Caco-2 (cell line): ENCODE measurements at regions of chr10 and their contacts with region 1.

Region 1: DNA sequence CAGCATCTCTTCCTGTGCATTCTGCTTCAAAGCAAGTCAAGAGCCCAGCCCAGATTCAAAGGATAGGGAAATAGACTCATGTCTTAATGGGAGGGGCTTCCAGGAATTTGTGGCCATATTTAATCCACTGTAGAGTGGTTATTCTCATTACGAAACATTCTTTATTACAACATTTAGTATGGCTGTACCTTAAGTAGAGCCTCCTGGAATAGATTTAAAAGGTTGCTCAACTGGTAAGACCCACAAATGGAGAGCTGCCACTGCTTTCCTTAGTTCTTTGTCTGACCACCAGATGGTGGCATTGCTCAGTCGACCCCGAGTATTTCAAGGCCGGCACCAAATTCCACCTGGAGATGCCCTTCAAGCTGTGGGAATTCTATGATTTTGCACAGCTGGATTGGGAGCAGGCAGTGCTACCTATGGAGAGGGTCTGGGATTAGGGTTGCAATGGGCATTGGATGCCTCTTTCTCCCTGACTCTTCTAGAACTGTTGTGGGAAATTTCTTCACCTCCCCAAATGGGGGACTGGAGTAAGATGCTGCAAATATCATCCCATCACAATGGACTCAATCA is 102.2 kb downstream of the RBM20 start:
- DNase-seq: peak; percentile 75 to 80
- H3K4me3 ChIP-seq: no peak overlapping the region
- H3K4me3 Mint-ChIP-seq: no peak overlapping the region
- H3K27ac Mint-ChIP-seq: no peak overlapping the region
- H3K4me1 ChIP-seq: no peaks in the 10 kb centered on the region
- H3K4me1 Mint-ChIP-seq: no peaks in the 10 kb centered on the region
- H3K27me3 ChIP-seq: no peaks in the 10 kb centered on the region; the same call in 1 of the 2 replicates
- H3K27me3 Mint-ChIP-seq: no peaks in the 10 kb centered on the region
- CTCF ChIP-seq: peak; percentile 77 to 79

Region 2: DNA sequence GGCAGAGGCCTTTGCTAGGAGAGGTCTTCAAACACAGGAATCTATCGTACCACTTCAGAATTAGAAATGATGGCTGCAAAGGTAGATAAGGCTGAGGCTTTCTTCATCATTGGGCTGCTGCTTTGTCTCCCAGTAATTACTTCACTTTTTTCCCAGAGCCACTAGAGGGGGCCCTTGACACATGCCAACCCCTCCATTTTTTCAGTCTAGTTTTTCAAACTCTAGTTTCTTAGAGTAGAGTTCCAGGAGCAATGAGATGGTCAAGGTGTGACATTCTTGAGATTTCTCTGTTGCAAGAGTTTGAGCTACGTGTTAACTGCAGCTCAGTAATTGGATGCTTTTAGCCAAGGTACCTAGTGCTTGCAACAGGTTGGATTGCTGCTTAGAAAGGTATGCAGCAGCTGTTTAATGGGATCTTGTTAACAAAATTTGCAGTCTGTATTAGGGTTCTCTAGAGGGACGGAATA is 136.0 kb before region 1 on chr10:
- CTCF ChIA-PET with region 1: no interaction called
- POLR2A ChIA-PET with region 1: no interaction called
- intact Hi-C with region 1: loop called (anchors 1 kb)
- DNase-seq: peak; percentile 56 to 78
- H3K4me3 ChIP-seq: no peak overlapping the region
- H3K4me3 Mint-ChIP-seq: no peak overlapping the region
- H3K27ac Mint-ChIP-seq: no peak overlapping the region
- H3K4me1 ChIP-seq: no peaks in the 10 kb centered on the region
- H3K4me1 Mint-ChIP-seq: peaks cover 6% of the 10 kb centered on the region
- H3K27me3 ChIP-seq: no peaks in the 10 kb centered on the region
- H3K27me3 Mint-ChIP-seq: no peaks in the 10 kb centered on the region
- CTCF ChIP-seq: peak; percentile 85 to 86

Region 3: DNA sequence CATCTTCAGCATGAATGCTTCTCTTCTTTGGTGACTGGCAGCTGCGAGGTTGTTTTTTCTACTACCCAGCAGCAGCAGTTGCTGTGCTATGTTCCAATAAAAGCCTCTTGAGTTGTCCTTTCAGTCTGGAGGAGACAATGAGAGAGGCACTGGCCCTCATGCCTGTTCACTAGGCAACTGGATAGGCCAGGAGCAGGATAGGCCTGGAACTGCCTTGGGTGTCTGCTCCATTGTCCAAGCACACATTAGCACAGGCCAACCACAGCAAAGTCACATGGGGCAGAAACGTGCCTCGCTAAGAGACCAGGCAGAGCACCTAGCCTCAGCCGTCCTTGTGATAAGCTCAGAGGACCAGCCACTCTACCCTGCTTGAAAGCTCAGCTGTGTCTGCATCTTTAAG is 48.5 kb after region 1 on chr10:
- CTCF ChIA-PET with region 1: interaction called, 12 read pairs
- POLR2A ChIA-PET with region 1: no interaction called
- intact Hi-C with region 1: loop called (anchors 1 kb)
- DNase-seq: no peak
- H3K4me3 ChIP-seq: no peak overlapping the region
- H3K4me3 Mint-ChIP-seq: no peak overlapping the region
- H3K27ac Mint-ChIP-seq: no peak overlapping the region
- H3K4me1 ChIP-seq: peaks cover 18% of the 10 kb centered on the region
- H3K4me1 Mint-ChIP-seq: peaks cover 10% of the 10 kb centered on the region
- H3K27me3 ChIP-seq: no peaks in the 10 kb centered on the region
- H3K27me3 Mint-ChIP-seq: no peaks in the 10 kb centered on the region
- CTCF ChIP-seq: no peak

Region 4: GRCh38 chr10:110857265-110858158 is 111.2 kb after region 1 on chr10:
- CTCF ChIA-PET with region 1: interaction called, 5 read pairs
- POLR2A ChIA-PET with region 1: no interaction called
- intact Hi-C with region 1: loop called (anchors 1 kb)
- DNase-seq: peak; percentile 88 to 90
- H3K4me3 ChIP-seq: no peak overlapping the region
- H3K4me3 Mint-ChIP-seq: peak overlapping the region; percentile 54
- H3K27ac Mint-ChIP-seq: peak overlapping the region; percentile 65
- H3K4me1 ChIP-seq: peaks cover 44% of the 10 kb centered on the region
- H3K4me1 Mint-ChIP-seq: peaks cover 24% of the 10 kb centered on the region
- H3K27me3 ChIP-seq: no peaks in the 10 kb centered on the region
- H3K27me3 Mint-ChIP-seq: no peaks in the 10 kb centered on the region
- CTCF ChIP-seq: no peak

Region 5: DNA sequence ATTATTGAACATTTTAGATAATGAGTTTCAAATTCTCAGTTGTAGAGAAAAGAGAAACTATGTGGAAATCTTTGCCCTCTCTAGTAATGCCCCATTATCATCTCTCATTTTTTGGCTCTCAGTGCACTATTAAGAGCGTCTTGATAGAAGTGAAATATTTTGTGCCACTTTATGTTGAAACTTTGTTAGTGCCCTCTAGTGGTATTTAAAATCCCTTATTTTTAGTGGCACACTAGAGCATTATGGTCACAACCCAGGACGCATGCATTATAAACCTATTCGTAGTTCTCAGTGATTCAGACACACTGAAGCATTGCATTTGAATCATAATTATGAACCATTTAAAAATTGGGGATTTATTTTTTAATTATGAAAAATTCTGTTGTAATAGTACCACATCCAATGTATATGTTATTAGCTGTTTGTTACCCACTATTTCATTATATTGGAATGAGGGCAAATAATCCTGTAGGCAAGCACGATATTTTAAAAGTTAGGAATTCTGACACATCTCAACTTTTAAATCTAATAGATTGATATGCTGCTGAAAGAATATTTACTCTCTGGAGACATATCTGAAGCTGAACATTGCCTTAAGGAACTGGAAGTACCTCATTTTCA is 147.3 kb after region 1 on chr10:
- CTCF ChIA-PET with region 1: interaction called, 5 read pairs
- POLR2A ChIA-PET with region 1: no interaction called
- intact Hi-C with region 1: loop called (anchors 1 kb)
- DNase-seq: peak in 1 of 2 experiments; percentile 29
- H3K4me3 ChIP-seq: no peak overlapping the region
- H3K4me3 Mint-ChIP-seq: no peak overlapping the region
- H3K27ac Mint-ChIP-seq: no peak overlapping the region
- H3K4me1 ChIP-seq: peaks cover 7% of the 10 kb centered on the region; the same call in 1 of the 2 replicates
- H3K4me1 Mint-ChIP-seq: peaks cover 17% of the 10 kb centered on the region
- H3K27me3 ChIP-seq: no peaks in the 10 kb centered on the region
- H3K27me3 Mint-ChIP-seq: no peaks in the 10 kb centered on the region
- CTCF ChIP-seq: peak; percentile 35 to 48

Region 6: GRCh38 chr10:111076191-111076681 is 329.9 kb after region 1 on chr10:
- CTCF ChIA-PET with region 1: no interaction called
- POLR2A ChIA-PET with region 1: no interaction called
- intact Hi-C with region 1: loop called (anchors 2 kb)
- DNase-seq: peak; percentile 52 to 80
- H3K4me3 ChIP-seq: peak overlapping the region; percentile 41
- H3K4me3 Mint-ChIP-seq: peak overlapping the region; percentile 75
- H3K27ac Mint-ChIP-seq: no peak overlapping the region
- H3K4me1 ChIP-seq: peaks cover 3% of the 10 kb centered on the region; the same call in 1 of the 2 replicates
- H3K4me1 Mint-ChIP-seq: peaks cover 8% of the 10 kb centered on the region
- H3K27me3 ChIP-seq: no peaks in the 10 kb centered on the region; the same call in 1 of the 2 replicates
- H3K27me3 Mint-ChIP-seq: peaks cover 30% of the 10 kb centered on the region
- CTCF ChIP-seq: peak; percentile 77 to 96